PC-9 (cell line): ENCODE measurements at regions of chr14 and their contacts with region 1.

Region 1: DNA sequence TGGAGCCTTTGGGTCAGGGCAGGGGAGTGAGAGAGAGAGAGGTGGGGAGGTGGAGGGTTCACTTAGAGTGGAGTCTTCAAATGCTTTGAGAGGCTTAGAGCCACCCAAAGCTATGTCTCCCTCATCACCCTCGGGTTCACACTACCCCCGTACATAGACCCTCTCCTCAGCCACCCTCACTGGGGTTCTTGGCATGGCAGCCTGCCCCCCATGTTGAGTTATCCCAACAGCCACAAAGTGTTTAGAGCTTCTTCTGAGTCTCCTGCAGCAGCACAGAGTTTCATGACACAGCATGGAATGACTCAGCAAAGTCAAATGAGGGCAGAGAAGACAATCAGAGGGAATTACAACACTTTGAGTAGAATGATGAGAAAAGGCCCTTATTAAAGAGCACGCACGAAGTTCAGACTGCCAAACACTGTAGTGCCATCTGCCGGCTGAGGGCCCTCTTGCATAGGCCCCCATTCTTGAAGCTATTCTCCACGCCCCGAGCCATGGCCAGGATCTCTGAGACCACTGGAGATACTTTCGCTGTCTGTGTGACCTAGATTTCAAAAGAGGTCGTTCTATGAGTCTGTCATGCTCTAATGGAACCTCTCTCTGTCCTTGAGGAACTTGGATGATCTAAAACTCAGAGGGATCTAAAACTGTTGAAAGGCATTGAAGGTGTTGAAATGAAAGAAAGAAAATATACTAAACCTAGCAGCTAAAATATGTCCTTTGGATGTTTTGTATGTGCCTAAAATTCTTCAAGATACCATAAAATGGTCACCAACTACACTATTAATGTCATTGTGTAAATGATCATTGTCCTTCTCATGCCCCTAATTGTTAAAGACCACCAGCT is 221.9 kb downstream of the PELI2 start:
- DNase-seq: peak; percentile 68 to 78
- H3K4me3 ChIP-seq: no peak overlapping the region
- H3K27ac ChIP-seq: peak overlapping the region; percentile 33; the same call in 1 of the 2 replicates
- H3K4me1 ChIP-seq: peaks cover 7% of the 10 kb centered on the region
- H3K27me3 ChIP-seq: no peaks in the 10 kb centered on the region
- CTCF ChIP-seq: peak; percentile 81

Region 2: GRCh38 chr14:55446218-55446654 is 893.8 kb before region 1 on chr14:
- CTCF ChIA-PET with region 1: no interaction called
- POLR2A ChIA-PET with region 1: interaction called, 5 read pairs
- intact Hi-C with region 1: loop called (anchors 1 kb)
- DNase-seq: peak in 1 of 2 experiments; percentile 49
- H3K4me3 ChIP-seq: no peak overlapping the region
- H3K27ac ChIP-seq: peak overlapping the region; percentile 86; the same call in 1 of the 2 replicates
- H3K4me1 ChIP-seq: peaks cover 49% of the 10 kb centered on the region
- H3K27me3 ChIP-seq: no peaks in the 10 kb centered on the region
- CTCF ChIP-seq: peak; percentile 88

Region 3: GRCh38 chr14:55807059-55807499 is 533.0 kb before region 1 on chr14:
- CTCF ChIA-PET with region 1: no interaction called
- POLR2A ChIA-PET with region 1: no interaction called
- intact Hi-C with region 1: loop called (anchors 1 kb)
- DNase-seq: peak; percentile 49 to 83
- H3K4me3 ChIP-seq: no peak overlapping the region
- H3K27ac ChIP-seq: no peak overlapping the region
- H3K4me1 ChIP-seq: peaks cover 23% of the 10 kb centered on the region
- H3K27me3 ChIP-seq: no peaks in the 10 kb centered on the region
- CTCF ChIP-seq: no peak

Region 4: DNA sequence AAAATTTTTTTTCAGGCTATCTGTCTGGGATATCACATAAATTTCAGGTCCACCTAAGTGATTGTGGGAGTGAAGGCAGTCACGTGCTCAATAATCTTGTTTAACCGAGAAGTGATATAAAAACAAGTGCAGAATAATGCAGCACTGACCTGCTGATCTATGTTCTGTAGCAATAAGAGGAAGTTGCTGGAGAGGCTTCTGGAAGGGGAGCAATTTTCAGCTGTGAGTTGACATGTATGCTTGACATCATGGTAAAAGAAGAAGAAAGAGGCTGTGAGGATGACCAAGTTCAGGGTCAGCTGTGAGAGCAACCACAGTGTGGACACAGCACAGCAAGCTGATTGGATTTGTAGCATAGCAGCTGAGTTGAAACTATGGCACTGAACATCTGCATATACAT is 393.8 kb before region 1 on chr14:
- CTCF ChIA-PET with region 1: no interaction called
- POLR2A ChIA-PET with region 1: no interaction called
- intact Hi-C with region 1: no loop called
- DNase-seq: no peak
- H3K4me3 ChIP-seq: no peak overlapping the region
- H3K27ac ChIP-seq: no peak overlapping the region
- H3K4me1 ChIP-seq: no peaks in the 10 kb centered on the region
- H3K27me3 ChIP-seq: no peaks in the 10 kb centered on the region
- CTCF ChIP-seq: no peak

Region 5: DNA sequence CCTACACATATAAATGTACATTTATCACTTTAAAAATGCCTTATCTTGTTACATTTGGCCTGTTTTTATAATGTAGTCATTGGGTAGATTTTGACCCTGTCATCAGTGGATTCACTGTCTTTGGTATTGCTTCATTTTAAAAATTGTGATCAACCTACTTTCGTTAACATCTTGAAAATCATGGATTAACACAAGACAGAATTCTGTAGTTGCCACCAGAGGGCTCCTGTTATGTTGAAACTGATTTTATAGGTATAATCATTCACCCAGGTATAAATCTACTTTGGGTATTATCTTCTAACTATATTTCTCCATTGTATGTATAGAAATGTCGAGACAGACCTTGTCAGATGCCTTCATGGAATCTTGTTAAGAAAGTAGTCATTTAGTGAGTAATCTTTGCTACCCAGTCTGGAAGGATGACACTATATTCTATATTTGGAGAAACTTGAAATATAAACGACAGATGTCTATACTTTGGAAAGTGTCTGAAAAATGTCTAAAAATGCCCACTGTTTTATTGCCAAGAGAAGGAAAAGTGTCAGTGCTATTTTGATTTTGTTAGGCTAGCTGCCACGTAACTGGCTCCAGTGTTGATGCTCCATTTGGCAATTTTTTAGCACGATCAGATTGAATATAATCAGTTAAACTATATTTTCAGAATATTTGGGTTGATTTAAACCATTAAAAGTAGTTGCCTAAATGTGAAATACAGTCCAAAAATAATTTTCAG is 92.4 kb before region 1 on chr14:
- CTCF ChIA-PET with region 1: no interaction called
- POLR2A ChIA-PET with region 1: no interaction called
- intact Hi-C with region 1: loop called (anchors 10 kb)
- DNase-seq: no peak
- H3K4me3 ChIP-seq: no peak overlapping the region
- H3K27ac ChIP-seq: no peak overlapping the region
- H3K4me1 ChIP-seq: 0 out of 2 replicates have a peak, but pooled peaks cover 7% of the 10 kb centered on the region
- H3K27me3 ChIP-seq: no peaks in the 10 kb centered on the region
- CTCF ChIP-seq: peak; percentile 61; the same call in 1 of the 2 replicates